Caco-2 (cell line): ENCODE measurements at regions of chr18 and their contacts with region 1.

Region 1: DNA sequence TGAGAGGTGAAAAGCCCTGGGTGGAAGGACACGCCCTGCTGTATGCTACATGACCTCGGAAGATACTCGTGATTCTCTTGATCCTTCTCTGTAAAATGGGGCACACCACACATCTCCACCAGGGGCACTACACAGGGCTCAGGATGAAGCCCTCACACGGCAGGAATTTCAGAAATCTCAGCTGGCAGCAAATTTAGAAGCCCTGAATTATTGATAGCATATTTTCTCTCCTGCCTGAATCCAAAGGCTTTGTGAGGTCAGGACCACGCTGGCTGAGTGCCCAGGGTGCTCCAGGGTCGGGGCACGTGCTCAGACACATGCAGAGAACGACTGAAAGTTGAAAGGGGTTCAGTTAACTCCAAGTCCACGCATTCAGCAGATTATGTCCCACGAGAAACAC is 42.1 kb upstream of the GALR1 start:
- DNase-seq: peak in 1 of 2 experiments; percentile 5
- H3K4me3 ChIP-seq: no peak overlapping the region
- H3K4me3 Mint-ChIP-seq: no peak overlapping the region
- H3K27ac Mint-ChIP-seq: no peak overlapping the region
- H3K4me1 ChIP-seq: no peaks in the 10 kb centered on the region
- H3K4me1 Mint-ChIP-seq: no peaks in the 10 kb centered on the region
- H3K27me3 ChIP-seq: no peaks in the 10 kb centered on the region
- H3K27me3 Mint-ChIP-seq: peaks cover 5% of the 10 kb centered on the region
- CTCF ChIP-seq: peak in 1 of 2 experiments; percentile 34

Region 2: DNA sequence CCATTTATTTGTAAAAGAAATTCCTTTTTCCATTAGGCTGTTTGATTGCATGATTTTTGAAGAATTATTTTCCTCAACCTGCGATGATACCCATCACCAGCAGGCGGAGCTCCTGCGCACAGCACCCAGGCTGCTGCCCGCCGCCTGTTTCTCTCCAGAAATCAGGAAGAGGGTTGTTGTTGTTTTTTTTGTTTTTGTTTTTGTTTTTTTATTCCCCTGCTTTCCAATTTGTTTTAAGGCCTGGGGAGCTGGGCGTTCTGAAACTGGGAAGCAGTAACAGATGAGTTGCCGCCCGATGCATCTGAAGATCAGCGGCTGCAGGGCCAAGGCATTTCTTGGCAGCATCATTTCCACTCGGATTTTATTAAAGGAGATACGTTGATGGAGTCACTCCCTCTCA is 207.0 kb before region 1 on chr18:
- CTCF ChIA-PET with region 1: interaction called, 5 read pairs
- POLR2A ChIA-PET with region 1: no interaction called
- intact Hi-C with region 1: loop called (anchors 1 kb)
- DNase-seq: peak in 1 of 2 experiments; percentile 35
- H3K4me3 ChIP-seq: no peak overlapping the region
- H3K4me3 Mint-ChIP-seq: no peak overlapping the region
- H3K27ac Mint-ChIP-seq: no peak overlapping the region
- H3K4me1 ChIP-seq: no peaks in the 10 kb centered on the region
- H3K4me1 Mint-ChIP-seq: no peaks in the 10 kb centered on the region
- H3K27me3 ChIP-seq: no peaks in the 10 kb centered on the region
- H3K27me3 Mint-ChIP-seq: no peaks in the 10 kb centered on the region
- CTCF ChIP-seq: peak; percentile 68 to 70